ENCODE measurements at regions of chr15 and their contacts with region 1.

Region 1: GRCh38 chr15:59247364-59247763 is 40.7 kb downstream of the LDHAL6B start:
- DNase-seq: peak; percentile 73
- H3K4me3 Mint-ChIP-seq: no peak overlapping the region
- H3K27ac Mint-ChIP-seq: peak overlapping the region; percentile 29
- H3K4me1 Mint-ChIP-seq: peaks cover 38% of the 10 kb centered on the region
- H3K27me3 Mint-ChIP-seq: peaks cover 4% of the 10 kb centered on the region

Region 2: DNA sequence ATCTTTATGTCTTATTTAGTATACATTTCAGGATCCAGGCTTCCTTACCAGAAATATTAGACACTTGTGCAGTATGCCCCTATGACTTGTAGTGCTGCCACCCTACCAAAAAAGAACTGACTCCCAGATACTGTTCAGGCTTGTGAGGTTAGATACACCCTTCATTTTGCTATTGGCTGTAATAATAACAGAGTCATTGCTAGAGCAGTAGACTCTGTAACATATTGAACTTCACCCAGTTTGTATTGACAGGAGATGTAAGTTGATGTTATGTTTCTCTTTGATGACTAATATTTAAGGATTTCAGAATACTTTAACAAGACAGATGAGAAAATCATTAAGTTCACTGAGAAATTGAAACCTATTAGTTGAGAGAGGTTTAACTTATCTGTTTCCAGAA is 227.0 kb before region 1 on chr15:
- CTCF ChIA-PET with region 1: no interaction called
- POLR2A ChIA-PET with region 1: no interaction called
- DNase-seq: no peak
- H3K4me3 Mint-ChIP-seq: no peak overlapping the region
- H3K27ac Mint-ChIP-seq: no peak overlapping the region
- H3K4me1 Mint-ChIP-seq: no peaks in the 10 kb centered on the region
- H3K27me3 Mint-ChIP-seq: no peaks in the 10 kb centered on the region

Region 3: DNA sequence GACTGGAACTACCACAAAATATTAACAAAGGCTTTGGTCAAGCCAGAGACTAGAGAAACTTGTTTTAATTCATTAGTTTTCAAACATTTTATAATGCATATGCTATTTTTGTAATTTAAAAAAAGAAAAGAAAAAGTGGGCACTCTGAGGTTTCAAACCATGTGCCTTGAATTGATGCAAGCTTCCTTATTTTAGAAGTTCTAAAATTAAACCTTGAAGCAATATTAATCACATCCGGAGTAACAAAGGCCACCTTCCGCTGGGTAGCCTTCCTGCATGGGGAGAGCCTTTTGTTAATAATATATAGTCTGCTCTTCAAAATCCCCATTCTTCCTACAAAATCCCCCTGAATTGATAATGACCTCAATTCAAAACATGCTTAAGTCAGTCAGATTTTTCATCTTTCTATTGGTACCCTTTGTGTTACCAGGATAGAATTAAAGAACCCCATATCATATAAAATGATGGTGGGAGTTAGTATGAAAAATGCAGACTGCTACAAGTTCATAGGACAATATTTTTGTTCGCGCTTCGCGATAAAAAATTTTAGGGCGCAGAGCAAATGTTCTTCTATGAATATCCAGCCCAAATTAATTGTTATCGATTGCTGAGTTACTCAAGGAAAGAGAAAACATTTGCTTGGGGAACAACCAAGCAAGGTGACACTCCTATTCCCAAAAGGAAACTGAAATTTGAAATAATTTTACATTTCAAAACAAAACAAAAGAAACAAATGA is 10.1 kb before region 1 on chr15:
- CTCF ChIA-PET with region 1: interaction called, 11 read pairs
- POLR2A ChIA-PET with region 1: interaction called, 6 read pairs
- DNase-seq: no peak
- H3K4me3 Mint-ChIP-seq: no peak overlapping the region
- H3K27ac Mint-ChIP-seq: no peak overlapping the region
- H3K4me1 Mint-ChIP-seq: peaks cover 7% of the 10 kb centered on the region
- H3K27me3 Mint-ChIP-seq: peaks cover 22% of the 10 kb centered on the region

Region 4: DNA sequence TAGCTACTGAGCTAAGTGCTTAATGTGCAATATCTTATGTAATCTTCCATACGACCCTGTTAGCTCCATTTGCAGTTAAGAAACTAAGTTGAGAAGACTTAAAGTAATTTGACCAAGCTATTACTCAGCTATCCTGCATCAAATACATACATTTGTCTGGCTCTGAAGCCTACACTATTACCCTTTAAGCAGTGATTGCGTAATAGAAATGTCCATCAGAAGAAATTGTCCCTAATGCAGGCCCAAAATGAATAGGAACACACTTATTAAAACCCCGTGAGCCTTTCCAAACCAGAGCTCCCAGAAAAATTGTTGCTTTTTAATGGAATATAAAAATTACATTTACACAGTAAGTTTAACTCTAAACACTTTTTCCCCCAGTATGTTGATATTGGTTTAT is 130.6 kb after region 1 on chr15:
- CTCF ChIA-PET with region 1: interaction called, 12 read pairs
- POLR2A ChIA-PET with region 1: no interaction called
- DNase-seq: no peak
- H3K4me3 Mint-ChIP-seq: no peak overlapping the region
- H3K27ac Mint-ChIP-seq: no peak overlapping the region
- H3K4me1 Mint-ChIP-seq: peaks cover 5% of the 10 kb centered on the region
- H3K27me3 Mint-ChIP-seq: peaks cover 48% of the 10 kb centered on the region

Region 5: GRCh38 chr15:59420986-59421618 is 173.7 kb after region 1 on chr15:
- CTCF ChIA-PET with region 1: interaction called, 10 read pairs
- POLR2A ChIA-PET with region 1: no interaction called
- DNase-seq: no peak
- H3K4me3 Mint-ChIP-seq: no peak overlapping the region
- H3K27ac Mint-ChIP-seq: no peak overlapping the region
- H3K4me1 Mint-ChIP-seq: peaks cover 23% of the 10 kb centered on the region
- H3K27me3 Mint-ChIP-seq: peaks cover 46% of the 10 kb centered on the region

Region 6: GRCh38 chr15:59492389-59493377 is 245.3 kb after region 1 on chr15:
- CTCF ChIA-PET with region 1: interaction called, 42 read pairs
- POLR2A ChIA-PET with region 1: no interaction called
- DNase-seq: peak; percentile 61
- H3K4me3 Mint-ChIP-seq: no peak overlapping the region
- H3K27ac Mint-ChIP-seq: no peak overlapping the region
- H3K4me1 Mint-ChIP-seq: peaks cover 1% of the 10 kb centered on the region
- H3K27me3 Mint-ChIP-seq: peaks cover 20% of the 10 kb centered on the region

Measured in activated CD4-positive, alpha-beta memory T cell treated with anti-CD3 and anti-CD28 coated beads, Interleukin-2, amount 10 ng/mL, durations not matched to agents 7 days and 5 days (primary cell).